ENCODE measurements at regions of chr1 and their contacts with region 1.

Region 1: DNA sequence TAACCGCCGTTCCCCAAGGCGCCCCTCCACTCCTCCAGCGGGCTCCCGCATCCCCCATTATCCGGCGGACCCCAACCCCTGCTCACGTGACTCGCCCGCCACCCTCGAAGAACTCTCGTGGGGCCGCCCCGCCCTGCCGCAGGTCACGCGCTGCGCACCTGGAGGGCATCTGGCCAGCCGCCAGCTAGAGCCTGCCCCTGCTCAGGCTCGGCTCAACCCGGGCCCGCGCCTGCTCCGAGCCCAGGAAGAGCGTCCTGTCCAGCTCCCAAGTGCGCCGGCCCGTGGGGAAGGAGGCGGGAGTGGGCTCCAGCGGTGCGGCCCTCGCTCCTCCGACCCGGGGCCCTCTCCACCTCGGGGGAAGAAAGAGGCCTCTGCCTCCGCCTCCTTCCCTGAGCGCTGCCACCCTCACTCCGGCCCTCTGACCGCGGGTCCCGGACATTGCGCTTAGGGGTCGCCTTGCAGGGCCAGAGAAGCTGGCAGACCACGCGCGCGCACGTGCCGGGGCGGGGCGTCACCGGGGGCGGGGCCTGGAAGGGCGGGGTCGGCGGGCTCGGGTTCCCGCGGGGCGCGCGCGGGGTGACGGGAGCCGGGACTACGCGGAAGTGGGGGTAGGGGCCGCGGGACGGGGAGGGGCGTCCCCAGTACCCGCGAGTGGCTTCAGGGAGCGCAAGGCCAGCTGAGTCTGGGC is 28.4 kb downstream of the HMGN2 start:
- DNase-seq: peak; percentile 93
- H3K4me3 Mint-ChIP-seq: peak overlapping the region; percentile 87
- H3K27ac Mint-ChIP-seq: peak overlapping the region; percentile 96
- H3K4me1 Mint-ChIP-seq: peaks cover 18% of the 10 kb centered on the region
- H3K27me3 Mint-ChIP-seq: no peaks in the 10 kb centered on the region

Region 2: GRCh38 chr1:26391450-26391849 is 109.2 kb before region 1 on chr1:
- CTCF ChIA-PET with region 1: no interaction called
- intact Hi-C with region 1: no loop called
- DNase-seq: peak; percentile 59
- H3K4me3 Mint-ChIP-seq: no peak overlapping the region
- H3K27ac Mint-ChIP-seq: no peak overlapping the region
- H3K4me1 Mint-ChIP-seq: peaks cover 19% of the 10 kb centered on the region
- H3K27me3 Mint-ChIP-seq: no peaks in the 10 kb centered on the region

Region 3: GRCh38 chr1:26408604-26409003 is 92.0 kb before region 1 on chr1:
- CTCF ChIA-PET with region 1: no interaction called
- intact Hi-C with region 1: no loop called
- DNase-seq: peak; percentile 86
- H3K4me3 Mint-ChIP-seq: no peak overlapping the region
- H3K27ac Mint-ChIP-seq: no peak overlapping the region
- H3K4me1 Mint-ChIP-seq: peaks cover 26% of the 10 kb centered on the region
- H3K27me3 Mint-ChIP-seq: peaks cover 46% of the 10 kb centered on the region

Region 4: DNA sequence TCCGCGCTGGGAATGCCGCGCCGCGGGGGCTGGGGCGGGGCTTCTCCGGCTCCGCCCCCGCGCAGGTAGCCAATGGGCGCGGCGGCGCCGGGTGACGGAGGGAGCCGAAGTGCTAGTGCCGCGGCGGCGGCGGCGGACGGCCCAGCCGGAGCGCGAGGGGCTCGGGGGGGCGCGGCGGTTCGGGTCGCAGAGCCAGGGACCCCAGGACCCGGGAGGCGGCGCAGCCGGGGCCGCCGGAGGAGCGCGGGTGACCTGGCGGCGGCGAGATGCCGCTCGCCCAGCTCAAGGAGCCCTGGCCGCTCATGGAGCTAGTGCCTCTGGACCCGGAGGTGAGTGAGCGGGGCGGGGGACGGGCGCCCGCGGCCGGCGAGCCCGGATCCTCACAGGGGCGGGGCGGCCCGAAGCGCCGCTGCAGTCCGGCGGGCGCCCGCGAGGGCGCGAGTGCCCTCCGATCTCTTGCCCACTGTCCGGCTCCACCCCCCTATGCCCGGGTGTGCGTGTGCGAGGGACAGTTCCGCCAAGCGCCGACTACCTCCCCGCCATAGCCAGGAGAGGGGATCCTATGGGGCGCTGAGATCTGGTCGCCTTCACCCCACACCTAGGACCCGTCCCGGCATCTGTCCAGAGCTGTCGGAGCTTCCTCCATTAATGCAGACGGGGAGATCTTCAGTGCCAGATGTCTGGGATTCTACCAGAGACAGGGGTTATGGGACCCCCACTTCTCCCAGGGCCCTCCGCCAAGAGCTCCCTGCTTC is 29.2 kb after region 1 on chr1 and contains the start of gene RPS6KA1:
- CTCF ChIA-PET with region 1: interaction called, 14 read pairs
- intact Hi-C with region 1: loop called (anchors 1 kb)
- DNase-seq: peak; percentile 47
- H3K4me3 Mint-ChIP-seq: peak within 1 kb of the TSS; percentile 85
- H3K27ac Mint-ChIP-seq: peak within 1 kb of the TSS; percentile 44
- H3K4me1 Mint-ChIP-seq: peaks cover 28% of the 10 kb centered on the region
- H3K27me3 Mint-ChIP-seq: no peaks in the 10 kb centered on the region
- total RNA-seq, gene RPS6KA1: 83.5 to 86.4 TPM

Region 5: DNA sequence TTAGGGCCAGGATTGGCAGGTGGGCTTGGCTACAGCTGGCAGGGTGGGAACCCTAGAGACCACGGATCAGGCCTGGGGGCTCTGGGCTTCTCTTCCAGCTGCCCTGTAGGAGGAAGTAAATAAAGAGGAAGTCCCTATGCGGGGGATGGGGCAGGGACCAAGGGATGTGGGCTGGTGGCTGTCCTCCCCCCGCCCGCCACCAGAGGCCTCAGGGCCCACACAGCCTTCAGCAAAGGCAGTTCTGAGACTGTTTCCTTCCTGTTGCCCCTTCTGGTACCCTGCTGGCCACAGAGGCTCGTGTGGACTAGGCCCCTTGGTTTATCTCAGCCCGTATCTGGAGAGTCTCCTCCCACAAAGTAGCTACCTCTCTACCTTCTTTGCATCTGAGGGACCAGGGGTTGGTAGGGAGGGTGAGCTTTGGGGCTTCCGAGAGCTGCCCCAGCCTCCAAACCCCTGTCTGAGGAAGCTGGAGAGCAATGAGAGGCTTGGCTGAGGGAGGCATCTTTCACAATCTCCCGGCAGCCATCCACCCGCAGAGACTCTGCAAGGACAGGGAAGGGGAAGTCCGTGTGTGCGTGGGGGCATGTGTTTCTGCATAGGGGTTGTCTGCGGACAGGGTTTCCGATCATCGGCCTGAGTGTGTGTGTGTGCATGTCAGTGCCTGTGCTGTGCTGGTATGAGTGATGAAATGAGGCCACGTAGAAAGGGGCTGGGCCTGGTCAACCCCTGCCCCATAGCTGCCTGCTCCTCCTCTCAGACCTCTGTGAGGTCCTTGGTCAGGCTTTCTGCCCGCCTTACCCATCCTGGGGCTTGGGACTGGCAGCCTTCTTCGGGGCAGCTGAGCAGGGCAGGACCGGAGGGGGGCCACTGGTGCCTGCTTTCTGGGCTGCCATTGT is 41.4 kb after region 1 on chr1:
- CTCF ChIA-PET with region 1: interaction called, 27 read pairs
- intact Hi-C with region 1: loop called (anchors 1 kb)
- DNase-seq: peak; percentile 91
- H3K4me3 Mint-ChIP-seq: peak overlapping the region; percentile 73
- H3K27ac Mint-ChIP-seq: peak overlapping the region; percentile 95
- H3K4me1 Mint-ChIP-seq: peaks cover 81% of the 10 kb centered on the region
- H3K27me3 Mint-ChIP-seq: no peaks in the 10 kb centered on the region

Region 6: GRCh38 chr1:26677306-26678115 is 176.9 kb after region 1 on chr1:
- CTCF ChIA-PET with region 1: no interaction called
- intact Hi-C with region 1: loop called (anchors 1 kb)
- DNase-seq: peak; percentile 84
- H3K4me3 Mint-ChIP-seq: no peak overlapping the region
- H3K27ac Mint-ChIP-seq: peak overlapping the region; percentile 21
- H3K4me1 Mint-ChIP-seq: peaks cover 16% of the 10 kb centered on the region
- H3K27me3 Mint-ChIP-seq: no peaks in the 10 kb centered on the region

Region 7: DNA sequence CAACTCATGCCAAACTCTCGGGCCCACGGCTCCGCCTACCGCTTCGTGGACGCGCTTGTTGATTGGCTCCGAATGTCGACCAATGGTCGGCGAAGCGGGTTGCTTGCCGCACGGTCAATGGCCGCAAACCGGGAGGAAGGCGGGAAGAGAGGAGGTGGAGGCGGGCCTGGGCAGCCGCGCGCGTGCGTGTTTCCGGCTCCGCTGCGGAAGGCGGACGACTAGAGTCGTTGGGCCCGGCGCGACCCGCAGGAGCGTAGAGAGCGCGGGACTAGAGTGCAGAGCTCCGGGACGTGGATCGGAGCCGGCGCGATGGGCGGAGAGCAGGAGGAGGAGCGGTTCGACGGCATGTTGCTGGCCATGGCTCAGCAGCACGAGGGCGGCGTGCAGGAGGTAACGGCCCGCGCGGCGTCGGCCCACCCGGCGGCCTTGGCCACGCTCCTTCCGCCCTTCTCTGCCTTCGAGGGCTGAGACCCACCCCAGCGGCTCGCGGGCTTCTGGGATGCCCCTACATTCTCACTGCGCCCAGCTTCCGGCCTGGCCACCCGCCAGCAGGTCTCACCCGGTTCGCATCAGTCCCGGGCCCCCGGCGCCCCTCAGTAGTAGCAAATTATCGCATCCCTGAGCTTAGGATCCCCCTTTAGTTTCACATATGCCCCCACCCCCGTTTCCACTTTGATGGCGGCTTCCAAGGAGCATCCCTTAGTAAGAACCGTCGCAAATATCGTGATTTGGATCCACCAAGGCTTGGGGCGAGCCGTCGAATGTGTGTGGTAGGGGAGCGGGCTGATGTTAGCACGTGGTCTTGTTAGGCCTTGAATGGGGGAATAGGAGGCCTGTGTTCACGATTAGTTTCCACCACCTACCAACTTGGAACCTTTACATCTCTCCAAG is 421.2 kb after region 1 on chr1 and contains the start of gene NUDC:
- CTCF ChIA-PET with region 1: no interaction called
- intact Hi-C with region 1: loop called (anchors 1 kb)
- DNase-seq: peak; percentile 98
- H3K4me3 Mint-ChIP-seq: peak within 1 kb of the TSS; percentile 99
- H3K27ac Mint-ChIP-seq: peak within 1 kb of the TSS; percentile 93
- H3K4me1 Mint-ChIP-seq: peaks cover 37% of the 10 kb centered on the region
- H3K27me3 Mint-ChIP-seq: no peaks in the 10 kb centered on the region
- total RNA-seq, gene NUDC: 75.3 to 78.1 TPM

Region 8: GRCh38 chr1:27087371-27088220 is 587.0 kb after region 1 on chr1:
- CTCF ChIA-PET with region 1: no interaction called
- intact Hi-C with region 1: no loop called
- DNase-seq: no peak
- H3K4me3 Mint-ChIP-seq: no peak overlapping the region
- H3K27ac Mint-ChIP-seq: no peak overlapping the region
- H3K4me1 Mint-ChIP-seq: peaks cover 5% of the 10 kb centered on the region
- H3K27me3 Mint-ChIP-seq: no peaks in the 10 kb centered on the region

Measured in activated naive CD4-positive, alpha-beta T cell treated with anti-CD3 and anti-CD28 coated beads for 36 hours (primary cell).